SK-N-SH (cell line): ENCODE measurements at regions of chr6 and their contacts with region 1.

Region 1: GRCh38 chr6:44074439-44075136 is 52.7 kb downstream of the MRPL14 start:
- DNase-seq: peak; percentile 83
- H3K4me3 ChIP-seq: peak overlapping the region in 1 of 2 experiments; percentile 16; a peak in 1 of 4 replicates
- H3K27ac ChIP-seq: peak overlapping the region in 1 of 2 experiments; percentile 99; a peak in 2 of 4 replicates
- H3K4me1 ChIP-seq: peaks cover 35 to 70% of the 10 kb centered on the region in 2 experiments
- H3K27me3 ChIP-seq: no peaks in the 10 kb centered on the region
- CTCF ChIP-seq: peak; percentile 91
- EP300 ChIP-seq: peak in 1 of 2 experiments; percentile 8; a peak in 1 of 4 replicates
- RAD21 ChIP-seq: peak; percentile 88

Region 2: DNA sequence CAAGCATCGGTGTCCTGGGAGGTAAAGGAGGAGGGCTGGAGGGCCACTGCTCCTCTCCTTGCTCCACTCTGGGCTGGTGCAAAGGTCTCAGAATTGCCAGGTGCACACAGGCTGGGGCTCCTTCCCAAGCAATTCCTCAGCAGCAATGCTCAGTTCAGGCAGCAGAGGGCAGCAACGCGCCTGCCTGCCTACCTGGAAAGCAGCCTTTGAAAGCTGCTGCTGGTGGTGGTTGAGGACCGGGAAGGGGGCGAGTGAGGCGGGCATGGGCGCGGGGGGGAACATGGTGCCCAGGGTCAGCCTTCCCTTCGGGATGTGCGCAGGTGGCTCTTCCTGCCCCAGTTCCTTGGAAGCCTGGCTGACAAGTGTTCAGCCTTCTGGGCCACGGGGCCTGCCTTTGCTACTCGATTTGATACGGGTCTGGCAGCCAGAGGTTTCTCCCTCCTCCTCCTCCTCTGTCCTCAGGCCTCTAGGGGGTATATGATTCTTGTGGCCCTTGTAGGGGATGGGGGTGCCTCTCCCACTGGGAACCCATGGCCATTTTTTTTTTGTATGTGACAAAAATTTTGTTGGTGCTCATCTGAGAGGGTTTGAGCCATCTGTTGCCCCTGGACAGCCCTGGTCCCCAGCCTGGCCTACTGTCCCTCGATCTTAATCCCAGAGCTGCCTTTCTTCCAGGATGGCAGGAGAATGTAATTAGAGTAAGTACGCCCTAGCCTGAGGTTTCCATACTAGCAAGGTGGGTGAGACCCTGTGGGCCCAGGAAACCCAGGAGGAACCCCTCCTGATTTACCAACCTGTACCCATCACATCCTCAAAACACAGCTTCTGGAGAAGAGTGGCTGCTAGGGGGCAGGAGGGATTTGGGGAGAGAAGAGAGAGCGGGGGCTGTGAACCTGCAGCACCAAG is 407.1 kb before region 1 on chr6:
- CTCF ChIA-PET with region 1: interaction called, 118 read pairs
- POLR2A ChIA-PET with region 1: interaction called, 10 read pairs
- DNase-seq: peak; percentile 88
- H3K4me3 ChIP-seq: peak overlapping the region in 1 of 2 experiments; percentile 33; a peak in 2 of 4 replicates
- H3K27ac ChIP-seq: peak overlapping the region in 1 of 2 experiments; percentile 31; a peak in 1 of 4 replicates
- H3K4me1 ChIP-seq: peaks cover 0 to 29% of the 10 kb centered on the region in 2 experiments; a peak in 1 of 4 replicates
- H3K27me3 ChIP-seq: no peaks in the 10 kb centered on the region
- CTCF ChIP-seq: peak; percentile 89
- EP300 ChIP-seq: no peak
- RAD21 ChIP-seq: peak; percentile 86

Region 3: DNA sequence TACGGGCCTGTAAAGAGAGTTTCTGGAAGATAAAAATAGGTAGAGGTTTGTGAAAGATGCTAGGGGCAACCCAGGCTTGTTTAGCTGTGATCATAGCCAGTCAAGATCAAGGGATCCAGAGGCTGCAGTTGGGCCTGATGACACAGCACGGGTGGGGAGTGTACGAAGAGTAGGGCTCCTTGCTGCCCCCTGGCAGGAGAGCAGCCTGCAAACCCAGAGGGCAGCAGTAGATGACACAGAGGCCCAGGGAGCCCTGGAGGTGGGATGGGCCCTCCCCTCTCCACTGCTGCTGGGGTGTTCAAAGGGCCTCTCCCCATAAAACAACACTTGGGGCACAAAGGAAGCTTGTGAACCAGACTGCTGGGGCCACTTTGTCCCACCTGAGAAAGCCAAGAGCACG is 257.4 kb before region 1 on chr6:
- CTCF ChIA-PET with region 1: no interaction called
- POLR2A ChIA-PET with region 1: no interaction called
- DNase-seq: no peak
- H3K4me3 ChIP-seq: no peak overlapping the region
- H3K27ac ChIP-seq: no peak overlapping the region
- H3K4me1 ChIP-seq: no peaks in the 10 kb centered on the region
- H3K27me3 ChIP-seq: no peaks in the 10 kb centered on the region
- CTCF ChIP-seq: peak; percentile 28; the same call in 1 of the 2 replicates
- EP300 ChIP-seq: no peak
- RAD21 ChIP-seq: no peak

Region 4: GRCh38 chr6:43910638-43911353 is 163.8 kb before region 1 on chr6:
- CTCF ChIA-PET with region 1: interaction called, 10 read pairs
- POLR2A ChIA-PET with region 1: no interaction called
- DNase-seq: no peak
- H3K4me3 ChIP-seq: no peak overlapping the region
- H3K27ac ChIP-seq: peak overlapping the region in 1 of 2 experiments; percentile 36; a peak in 1 of 4 replicates
- H3K4me1 ChIP-seq: peaks cover 24 to 75% of the 10 kb centered on the region in 2 experiments
- H3K27me3 ChIP-seq: no peaks in the 10 kb centered on the region
- CTCF ChIP-seq: no peak
- EP300 ChIP-seq: no peak
- RAD21 ChIP-seq: no peak

Region 5: DNA sequence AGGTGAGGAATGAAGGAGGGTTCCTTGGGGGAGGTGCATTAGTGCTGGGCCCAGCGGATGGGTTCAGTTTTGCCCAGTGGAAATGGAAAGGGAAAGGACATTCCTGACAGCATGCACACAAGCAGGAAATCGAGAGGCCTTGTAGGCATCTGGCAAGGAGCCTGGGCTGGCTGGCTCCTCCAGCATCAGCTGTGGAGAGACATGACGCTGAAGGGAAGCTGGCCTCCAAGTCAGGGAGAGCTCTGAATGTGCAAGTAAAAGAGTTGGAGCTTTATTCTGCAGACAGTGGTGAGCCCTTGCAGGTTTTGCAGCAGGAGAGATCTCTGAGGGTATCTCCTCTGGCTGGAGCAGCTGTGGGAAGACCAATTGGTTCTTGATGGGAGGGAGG is 101.7 kb before region 1 on chr6:
- CTCF ChIA-PET with region 1: interaction called, 15 read pairs
- POLR2A ChIA-PET with region 1: no interaction called
- DNase-seq: no peak
- H3K4me3 ChIP-seq: no peak overlapping the region
- H3K27ac ChIP-seq: peak overlapping the region; percentile 42 to 81
- H3K4me1 ChIP-seq: peaks cover 9 to 43% of the 10 kb centered on the region in 2 experiments; a peak in 3 of 4 replicates
- H3K27me3 ChIP-seq: no peaks in the 10 kb centered on the region
- CTCF ChIP-seq: no peak
- EP300 ChIP-seq: no peak
- RAD21 ChIP-seq: no peak

Region 6: DNA sequence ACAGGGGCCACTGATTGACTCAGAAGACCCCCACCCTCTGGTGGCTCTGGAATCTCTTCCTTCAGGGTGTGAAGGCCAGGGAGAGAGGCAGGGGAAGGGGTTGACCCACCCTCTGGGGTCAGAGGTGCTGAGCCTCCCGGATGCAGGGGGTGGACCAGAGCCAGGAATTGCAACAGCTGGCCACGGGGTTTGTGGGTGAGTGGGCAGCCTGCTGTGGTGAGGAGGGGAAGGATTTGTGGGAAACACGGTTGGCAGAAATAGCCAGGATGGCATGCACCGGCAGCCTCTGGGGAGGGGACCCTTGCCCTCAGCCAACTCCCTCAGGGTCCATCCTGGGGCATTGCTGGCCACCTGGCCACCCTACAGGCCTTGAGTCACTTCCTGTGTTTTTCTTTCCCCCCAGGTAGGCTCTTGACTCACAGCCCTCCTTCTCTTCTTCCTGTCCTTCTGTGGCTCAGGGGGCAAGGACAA is 40.2 kb before region 1 on chr6:
- CTCF ChIA-PET with region 1: interaction called, 19 read pairs
- POLR2A ChIA-PET with region 1: no interaction called
- DNase-seq: no peak
- H3K4me3 ChIP-seq: no peak overlapping the region
- H3K27ac ChIP-seq: no peak overlapping the region
- H3K4me1 ChIP-seq: peaks cover 16 to 27% of the 10 kb centered on the region in 2 experiments; a peak in 3 of 4 replicates
- H3K27me3 ChIP-seq: no peaks in the 10 kb centered on the region
- CTCF ChIP-seq: no peak
- EP300 ChIP-seq: no peak
- RAD21 ChIP-seq: no peak

Region 7: DNA sequence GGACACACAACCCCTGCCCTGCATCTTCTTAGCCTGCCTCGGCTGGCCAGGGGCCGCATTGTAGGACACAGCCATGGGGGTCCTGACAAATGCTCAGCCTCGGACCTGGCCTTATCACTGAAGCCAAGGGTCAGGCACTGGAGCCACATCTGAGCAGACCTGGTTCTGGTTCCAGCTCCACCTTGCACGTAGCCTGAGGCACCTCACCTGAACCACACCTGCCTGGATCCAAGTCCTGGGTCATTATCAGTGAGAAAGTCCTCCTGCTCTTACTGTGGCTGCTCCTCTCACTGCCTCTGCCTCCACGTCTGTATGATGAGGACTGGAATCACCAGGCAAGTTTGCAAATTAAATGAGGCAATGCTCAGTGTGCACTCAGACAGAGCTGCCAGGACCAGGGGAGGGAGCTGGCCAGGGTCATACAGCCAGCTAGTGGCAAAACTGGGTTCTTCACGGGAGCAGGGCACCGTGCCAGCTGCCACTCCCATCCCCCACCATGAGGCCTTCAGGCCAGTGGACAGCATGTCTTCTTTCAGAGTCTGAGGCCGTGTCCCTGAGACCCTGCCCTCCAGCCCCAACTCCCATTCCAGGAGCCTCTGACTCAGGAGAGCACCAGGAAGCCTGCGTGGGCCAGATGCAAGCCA is 12.5 kb after region 1 on chr6:
- CTCF ChIA-PET with region 1: interaction called, 37 read pairs
- POLR2A ChIA-PET with region 1: interaction called, 7 read pairs
- DNase-seq: peak; percentile 80
- H3K4me3 ChIP-seq: no peak overlapping the region
- H3K27ac ChIP-seq: peak overlapping the region in 1 of 2 experiments; percentile 86; a peak in 2 of 4 replicates
- H3K4me1 ChIP-seq: peaks cover 0 to 51% of the 10 kb centered on the region in 2 experiments; a peak in 2 of 4 replicates
- H3K27me3 ChIP-seq: no peaks in the 10 kb centered on the region
- CTCF ChIP-seq: no peak
- EP300 ChIP-seq: no peak; a peak in 1 of 4 replicates
- RAD21 ChIP-seq: peak; percentile 42; the same call in 1 of the 2 replicates

Region 8: DNA sequence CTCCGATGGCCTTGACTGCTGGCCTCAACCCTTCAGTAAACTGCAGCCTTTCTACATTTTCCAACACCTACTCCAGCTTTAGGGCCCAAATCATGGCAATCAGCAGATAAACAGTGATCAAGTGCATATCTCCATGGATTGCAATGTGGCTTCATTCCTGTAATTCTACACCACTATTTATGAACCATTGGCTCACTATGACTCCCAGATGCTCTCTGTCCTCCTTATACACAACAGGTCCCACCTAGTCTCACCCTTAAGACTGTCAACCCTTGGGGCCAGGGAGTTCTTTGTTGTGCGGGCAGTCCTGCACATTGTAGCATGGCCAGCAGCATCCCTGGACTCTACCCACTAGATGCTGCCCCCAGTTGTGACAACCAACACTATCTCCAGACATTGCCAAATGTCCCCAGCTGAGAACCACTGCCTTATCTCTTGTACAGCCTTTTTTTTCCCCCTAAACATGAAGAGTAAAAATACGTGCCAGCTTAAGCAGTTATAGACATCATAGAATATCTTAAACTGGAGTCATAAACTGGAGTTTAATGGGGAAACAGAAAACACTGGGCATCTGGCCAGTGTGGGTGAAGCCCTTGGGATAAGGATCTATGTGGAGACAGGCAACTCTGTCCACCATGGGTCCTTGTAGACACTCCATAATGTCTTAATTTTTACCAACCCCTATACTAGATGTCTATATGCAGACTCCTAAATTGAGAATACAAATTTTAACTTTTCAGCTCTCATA is 31.6 kb after region 1 on chr6:
- CTCF ChIA-PET with region 1: no interaction called
- POLR2A ChIA-PET with region 1: no interaction called
- DNase-seq: no peak
- H3K4me3 ChIP-seq: no peak overlapping the region
- H3K27ac ChIP-seq: no peak overlapping the region
- H3K4me1 ChIP-seq: peaks cover 0 to 3% of the 10 kb centered on the region in 2 experiments; a peak in 1 of 4 replicates
- H3K27me3 ChIP-seq: no peaks in the 10 kb centered on the region
- CTCF ChIP-seq: no peak
- EP300 ChIP-seq: no peak
- RAD21 ChIP-seq: no peak

Region 9: GRCh38 chr6:45613656-45614055 is 1539.1 kb after region 1 on chr6:
- CTCF ChIA-PET with region 1: no interaction called
- POLR2A ChIA-PET with region 1: no interaction called
- DNase-seq: no peak
- H3K4me3 ChIP-seq: no peak overlapping the region
- H3K27ac ChIP-seq: no peak overlapping the region
- H3K4me1 ChIP-seq: peaks cover 0 to 4% of the 10 kb centered on the region in 2 experiments; a peak in 3 of 4 replicates
- H3K27me3 ChIP-seq: no peaks in the 10 kb centered on the region
- CTCF ChIP-seq: no peak
- EP300 ChIP-seq: no peak
- RAD21 ChIP-seq: no peak